ENCODE measurements at regions of chr14 and their contacts with region 1.

Region 1: DNA sequence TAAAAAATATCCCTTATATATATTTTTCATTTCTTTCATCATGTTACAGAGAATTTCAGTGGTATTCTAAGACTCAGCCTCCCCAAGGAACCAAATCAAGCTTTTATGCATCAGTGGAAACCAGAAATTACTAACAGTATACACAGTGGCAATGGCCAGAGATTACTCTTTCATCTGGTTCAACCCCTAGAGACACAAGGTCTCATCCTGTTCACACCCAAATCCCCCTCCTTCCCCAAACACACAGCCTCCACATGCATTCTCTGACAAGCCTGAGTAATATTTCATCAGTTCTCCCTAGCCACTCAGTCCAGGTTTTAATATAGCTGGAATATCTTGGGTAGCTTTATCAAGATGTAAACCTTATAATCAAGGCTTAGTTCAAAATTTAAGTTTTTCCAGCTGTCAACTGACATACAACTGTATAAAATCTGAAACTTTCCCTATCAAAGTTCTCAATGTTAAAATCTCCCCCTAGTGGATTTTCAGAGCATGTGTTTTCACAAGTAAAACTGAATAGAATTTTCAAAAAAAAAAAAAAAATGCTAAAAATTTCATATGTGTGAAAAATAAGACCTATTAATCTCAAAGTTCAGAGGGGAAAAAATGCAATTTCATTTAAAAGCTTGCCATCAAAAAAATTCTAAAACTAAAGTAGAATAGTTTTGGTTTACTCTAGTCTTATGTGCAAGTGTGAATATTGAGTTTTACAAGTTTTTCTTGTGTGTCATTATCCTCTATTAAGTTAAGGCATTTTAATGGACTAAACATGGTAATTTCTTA is 10.5 kb upstream of the SSTR1 start:
- DNase-seq: peak; percentile 43
- H3K4me3 ChIP-seq: no peak overlapping the region
- H3K27ac ChIP-seq: no peak overlapping the region
- H3K4me1 ChIP-seq: peaks cover 12% of the 10 kb centered on the region
- H3K27me3 ChIP-seq: no peaks in the 10 kb centered on the region
- CTCF ChIP-seq: peak; percentile 75

Region 2: DNA sequence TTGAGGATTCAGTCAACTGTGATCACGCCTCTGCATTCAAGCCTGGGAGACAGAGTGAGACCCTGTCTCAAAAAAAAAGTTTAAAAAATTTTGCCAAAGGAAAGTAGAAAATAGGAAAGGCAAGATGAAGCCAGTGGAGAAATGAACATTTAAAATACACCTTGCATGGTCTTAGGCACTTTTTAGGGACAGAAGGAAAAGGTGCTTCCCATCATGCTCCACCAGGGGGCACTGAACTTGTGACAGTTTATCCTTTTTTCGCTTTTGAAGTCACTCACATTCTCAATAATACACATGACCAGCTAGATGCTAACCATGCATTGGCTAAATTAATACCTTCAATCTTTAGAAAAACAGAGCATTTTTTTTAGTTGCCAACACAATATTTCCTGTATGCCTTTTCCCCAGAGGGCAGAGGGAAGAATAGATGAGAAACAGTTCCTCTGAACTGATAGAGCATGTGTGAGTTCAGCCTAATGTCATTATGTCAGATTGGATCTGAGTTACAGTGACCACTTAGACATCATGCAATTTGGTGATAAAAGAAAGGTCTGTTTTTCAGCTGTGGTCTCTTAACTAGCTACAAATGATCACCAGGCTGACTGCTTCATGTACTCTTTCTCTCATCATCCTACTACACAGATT is 211.2 kb before region 1 on chr14:
- CTCF ChIA-PET with region 1: no interaction called
- POLR2A ChIA-PET with region 1: no interaction called
- intact Hi-C with region 1: loop called (anchors 2 kb)
- DNase-seq: peak; percentile 77
- H3K4me3 ChIP-seq: no peak overlapping the region
- H3K27ac ChIP-seq: no peak overlapping the region
- H3K4me1 ChIP-seq: no peaks in the 10 kb centered on the region
- H3K27me3 ChIP-seq: no peaks in the 10 kb centered on the region
- CTCF ChIP-seq: peak; percentile 84

Region 3: GRCh38 chr14:38248321-38249050 is 51.3 kb after region 1 on chr14:
- CTCF ChIA-PET with region 1: no interaction called
- POLR2A ChIA-PET with region 1: no interaction called
- intact Hi-C with region 1: no loop called
- DNase-seq: peak; percentile 26
- H3K4me3 ChIP-seq: no peak overlapping the region
- H3K27ac ChIP-seq: no peak overlapping the region
- H3K4me1 ChIP-seq: no peaks in the 10 kb centered on the region
- H3K27me3 ChIP-seq: no peaks in the 10 kb centered on the region
- CTCF ChIP-seq: peak; percentile 53; the same call in 1 of the 2 replicates

Region 4: DNA sequence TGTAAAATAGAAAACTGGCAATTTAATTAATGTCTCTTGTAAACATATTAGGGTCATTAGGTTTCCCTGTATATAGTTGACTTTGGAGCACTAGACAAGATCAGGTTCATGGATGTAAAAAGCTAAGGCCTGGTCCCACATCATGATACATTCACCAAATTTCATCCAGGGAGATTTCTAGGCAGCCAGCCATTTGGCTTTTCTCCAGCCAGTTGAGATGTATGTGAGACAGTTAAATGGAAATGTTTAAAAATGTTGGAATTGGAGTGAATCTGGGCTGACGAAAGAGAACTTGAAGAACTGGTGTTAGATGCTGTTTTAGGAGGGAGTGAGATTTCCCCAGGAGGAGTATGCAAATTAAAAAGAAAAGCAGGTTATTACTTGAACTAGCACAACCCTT is 100.5 kb after region 1 on chr14:
- CTCF ChIA-PET with region 1: no interaction called
- POLR2A ChIA-PET with region 1: no interaction called
- intact Hi-C with region 1: no loop called
- DNase-seq: no peak
- H3K4me3 ChIP-seq: no peak overlapping the region
- H3K27ac ChIP-seq: no peak overlapping the region
- H3K4me1 ChIP-seq: peaks cover 6% of the 10 kb centered on the region
- H3K27me3 ChIP-seq: no peaks in the 10 kb centered on the region
- CTCF ChIP-seq: no peak

Measured in A673 (cell line).